Posterior vena cava (tissue), 2 donors: ENCODE measurements at regions of chr7 and their contacts with region 1.

Region 1: DNA sequence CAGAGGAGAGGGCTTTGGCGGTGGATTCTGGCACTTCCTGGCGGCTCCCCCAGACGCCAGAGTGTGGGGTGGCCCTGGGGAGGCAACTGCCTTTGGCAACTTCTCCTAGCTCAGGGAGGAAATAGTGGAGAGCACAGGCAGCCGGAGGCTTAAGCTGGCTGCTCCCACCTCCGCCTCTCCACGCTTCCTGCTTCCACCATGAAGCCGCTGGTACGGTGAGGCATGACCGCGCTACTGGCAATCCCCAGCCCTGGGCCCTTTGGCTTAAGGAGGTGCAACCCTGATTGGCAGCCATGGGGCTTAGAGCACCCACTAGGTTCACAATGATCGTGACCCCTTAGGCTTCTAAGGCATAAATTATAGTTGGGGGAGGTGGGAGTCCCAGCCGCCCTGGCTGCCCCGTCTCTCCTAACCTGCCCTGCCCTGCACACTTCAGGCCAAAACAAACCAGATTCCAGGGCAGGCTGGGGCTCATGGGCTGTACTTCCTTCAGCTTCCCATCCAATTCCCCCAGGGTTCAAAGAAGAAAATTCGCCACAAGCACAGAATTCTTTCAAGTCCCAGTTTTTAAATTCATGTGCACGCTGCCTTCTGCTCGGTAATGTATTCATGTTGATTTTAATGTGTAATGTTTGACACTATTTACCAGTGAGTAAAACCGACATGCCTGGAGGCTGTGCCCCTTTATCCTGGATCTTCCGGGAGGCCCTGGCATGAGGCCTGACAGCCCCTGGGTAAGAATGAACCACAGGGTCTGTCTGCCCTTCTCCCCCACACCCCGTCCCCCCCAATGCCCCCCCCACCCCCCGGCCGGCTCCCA is 90.7 kb upstream of the LRRC4 start:
- DNase-seq: peak; percentile 88

Region 2: GRCh38 chr7:127550247-127550646 is 571.7 kb before region 1 on chr7:
- intact Hi-C with region 1: loop called in 1 of 2 experiments (anchors 5 kb)
- DNase-seq: no peak

Region 3: DNA sequence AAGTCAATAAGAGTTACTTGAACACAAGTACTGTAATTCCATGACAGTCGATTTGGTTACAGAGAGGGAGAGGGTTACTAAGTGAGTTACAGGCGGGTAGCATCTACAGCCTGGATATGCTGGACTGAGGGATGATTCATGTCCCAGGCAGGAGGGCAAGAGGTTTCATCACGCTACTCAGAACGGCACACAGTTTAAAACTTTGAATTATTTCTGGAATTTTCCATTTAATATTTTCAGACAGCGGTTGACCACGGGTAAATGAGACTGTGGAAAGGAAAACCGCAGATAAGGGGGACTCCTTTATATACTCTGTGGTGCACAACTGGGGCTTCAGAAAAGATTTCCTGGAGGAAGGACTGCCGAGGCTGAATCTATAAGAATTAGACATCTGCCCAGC is 65.0 kb before region 1 on chr7:
- intact Hi-C with region 1: no loop called
- DNase-seq: no peak

Region 4: GRCh38 chr7:128209229-128210035 is 87.5 kb after region 1 on chr7:
- intact Hi-C with region 1: no loop called
- DNase-seq: peak; percentile 89